ENCODE measurements at regions of chr11 and their contacts with region 1.

Region 1: GRCh38 chr11:65027213-65028067 is at the start of gene SNX15:
- DNase-seq: peak; percentile 95 to 97
- ATAC-seq: peak; percentile 99
- H3K4me3 ChIP-seq: peak within 1 kb of the TSS; percentile 28 to 83
- H3K27ac ChIP-seq: peak within 1 kb of the TSS in 1 of 2 donors; percentile 50
- H3K4me1 ChIP-seq: no peaks in the 10 kb centered on the region
- H3K27me3 ChIP-seq: no peaks in the 10 kb centered on the region
- total RNA-seq, gene SNX15: 19.9 to 26.1 TPM

Region 2: DNA sequence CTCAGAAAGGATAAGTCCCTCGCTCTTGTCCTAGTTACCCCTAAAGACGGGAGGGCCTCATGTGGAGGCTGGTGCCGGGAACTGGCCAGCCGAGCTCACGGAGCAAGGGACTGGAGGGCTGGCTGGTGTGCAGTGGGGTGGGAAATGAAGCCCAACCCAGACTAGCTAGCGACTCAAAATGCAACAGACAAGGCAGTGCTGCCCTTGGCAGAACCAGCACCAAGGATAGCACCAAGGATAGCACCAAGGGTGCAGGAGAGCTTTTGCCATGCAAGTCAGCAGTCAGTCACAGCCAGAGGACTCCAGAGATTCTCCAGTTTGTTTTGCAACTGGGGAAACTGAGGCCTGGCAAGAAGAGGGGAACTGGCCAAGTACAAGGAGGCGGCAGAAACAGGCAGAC is 24.2 kb before region 1 on chr11:
- intact Hi-C with region 1: no loop called
- DNase-seq: no peak
- ATAC-seq: no peak
- H3K4me3 ChIP-seq: no peak overlapping the region
- H3K27ac ChIP-seq: no peak overlapping the region
- H3K4me1 ChIP-seq: no peaks in the 10 kb centered on the region
- H3K27me3 ChIP-seq: no peaks in the 10 kb centered on the region

Region 3: DNA sequence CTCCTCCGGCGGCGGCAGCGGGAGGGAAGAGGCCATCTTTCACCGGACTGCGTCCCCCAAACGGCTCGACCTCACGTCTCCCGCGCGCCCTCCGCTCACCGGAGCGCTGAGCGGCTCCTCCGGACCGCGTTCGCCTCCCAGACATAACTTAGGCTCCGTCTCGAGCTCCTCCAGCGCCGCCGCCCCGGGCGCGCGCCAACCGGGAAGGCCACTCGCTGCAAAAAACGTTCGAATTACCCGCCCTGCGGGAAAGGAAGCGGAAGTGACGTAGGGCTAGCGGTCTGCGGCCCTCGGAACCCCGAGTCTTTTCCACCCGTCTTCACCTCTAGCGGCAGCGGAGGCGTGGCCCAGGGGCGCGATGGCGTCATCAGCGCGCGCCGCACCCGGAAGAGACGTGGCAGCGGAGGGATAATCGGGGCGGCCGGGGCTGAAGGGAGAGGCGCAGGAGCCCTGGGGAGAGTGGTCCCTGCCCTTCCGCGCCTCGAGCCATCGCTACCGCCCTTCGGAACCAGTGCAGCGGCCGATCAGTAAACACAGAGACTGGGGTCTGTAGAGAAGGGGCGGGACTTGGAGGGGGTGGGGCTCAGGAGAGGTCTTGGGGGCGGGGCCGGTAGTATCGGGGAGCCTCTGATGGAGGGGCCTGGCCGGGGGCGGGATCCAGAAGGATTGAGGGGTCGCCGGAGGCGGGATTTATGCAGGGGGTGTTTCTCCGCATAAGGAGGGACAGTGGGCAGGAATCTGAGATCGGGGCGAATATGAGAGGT is 56.6 kb after region 1 on chr11 and contains the starts of genes CDCA5 and ZFPL1:
- intact Hi-C with region 1: loop called in 1 of 2 experiments (anchors 10 kb)
- DNase-seq: peak; percentile 97 to 98
- ATAC-seq: peak; percentile 98
- H3K4me3 ChIP-seq: peak within 1 kb of the TSS; percentile 79 to 83
- H3K27ac ChIP-seq: peak within 1 kb of the TSS; percentile 17 to 35
- H3K4me1 ChIP-seq: no peaks in the 10 kb centered on the region
- H3K27me3 ChIP-seq: no peaks in the 10 kb centered on the region
- total RNA-seq, gene CDCA5: 0.81 to 1.0 TPM
- total RNA-seq, gene ZFPL1: 31.5 to 35.0 TPM

Measured in aorta (tissue), 5 donors.